Activated CD8-positive, alpha-beta memory T cell treated with anti-CD3 and anti-CD28 coated beads, Interleukin-2, amount 10 ng/mL, durations not matched to agents 7 days and 5 days (primary cell): ENCODE measurements at regions of chr9 and their contacts with region 1.

Region 1: GRCh38 chr9:124216567-124217176 is 41.1 kb upstream of the NEK6 start:
- DNase-seq: peak; percentile 87
- ATAC-seq: peak; percentile 70
- H3K4me3 Mint-ChIP-seq: peak overlapping the region; percentile 49
- H3K27ac Mint-ChIP-seq: peak overlapping the region; percentile 92
- H3K4me1 Mint-ChIP-seq: peaks cover 55% of the 10 kb centered on the region
- H3K27me3 Mint-ChIP-seq: peaks cover 13% of the 10 kb centered on the region

Region 2: DNA sequence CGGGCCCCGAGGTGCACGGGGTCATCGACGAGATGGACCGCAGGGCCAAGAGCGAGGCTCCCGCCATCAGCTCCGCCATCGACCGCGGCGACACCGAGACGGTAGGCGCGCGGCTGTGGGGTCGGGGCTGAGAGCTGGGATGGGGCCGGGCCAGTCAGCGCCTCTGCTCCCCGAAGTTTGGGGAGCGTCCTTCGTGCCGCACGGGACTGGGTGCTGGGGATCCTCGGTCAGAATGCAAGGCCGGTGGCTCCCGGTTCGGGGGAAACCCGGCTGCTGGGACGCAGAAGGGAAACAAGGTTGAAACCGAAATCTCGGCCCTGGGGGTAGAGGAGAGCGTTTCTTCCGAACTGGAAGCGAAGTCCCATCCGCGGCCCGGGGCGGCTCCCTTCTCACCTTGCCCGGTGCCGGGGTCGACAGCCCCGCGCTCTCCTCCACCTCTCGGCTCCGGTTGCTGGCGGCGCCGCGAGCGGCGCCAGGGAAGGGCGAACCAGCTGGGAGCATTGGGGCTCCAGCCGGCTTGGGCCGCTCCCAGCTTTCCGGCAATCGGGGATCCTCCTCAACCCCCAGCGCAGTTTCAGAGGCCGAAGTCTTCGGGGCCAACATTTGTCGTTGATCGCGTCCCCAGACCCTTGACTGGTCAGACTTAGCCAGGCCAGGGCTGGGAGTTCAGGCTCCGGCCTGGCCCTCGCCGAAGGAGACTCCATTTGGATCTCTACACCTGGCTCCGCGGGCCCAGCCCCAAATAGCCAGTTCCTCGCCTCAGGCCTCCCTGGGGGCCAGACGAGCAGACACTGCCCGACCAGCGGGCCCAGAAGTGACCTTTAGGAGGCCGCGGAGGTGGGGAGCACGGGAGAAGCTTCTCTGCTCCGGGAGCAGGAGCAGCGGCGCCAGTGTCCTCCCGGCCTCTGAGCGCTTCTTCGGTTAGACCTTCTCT is 204.0 kb before region 1 on chr9:
- CTCF ChIA-PET with region 1: no interaction called
- DNase-seq: no peak
- ATAC-seq: no peak
- H3K4me3 Mint-ChIP-seq: no peak overlapping the region
- H3K27ac Mint-ChIP-seq: peak overlapping the region; percentile 54
- H3K4me1 Mint-ChIP-seq: peaks cover 18% of the 10 kb centered on the region
- H3K27me3 Mint-ChIP-seq: peaks cover 82% of the 10 kb centered on the region

Region 3: GRCh38 chr9:124202447-124202971 is 14.2 kb before region 1 on chr9:
- CTCF ChIA-PET with region 1: interaction called, 17 read pairs
- DNase-seq: peak; percentile 92
- ATAC-seq: peak; percentile 99
- H3K4me3 Mint-ChIP-seq: peak overlapping the region; percentile 52
- H3K27ac Mint-ChIP-seq: peak overlapping the region; percentile 95
- H3K4me1 Mint-ChIP-seq: peaks cover 60% of the 10 kb centered on the region
- H3K27me3 Mint-ChIP-seq: peaks cover 8% of the 10 kb centered on the region

Region 4: DNA sequence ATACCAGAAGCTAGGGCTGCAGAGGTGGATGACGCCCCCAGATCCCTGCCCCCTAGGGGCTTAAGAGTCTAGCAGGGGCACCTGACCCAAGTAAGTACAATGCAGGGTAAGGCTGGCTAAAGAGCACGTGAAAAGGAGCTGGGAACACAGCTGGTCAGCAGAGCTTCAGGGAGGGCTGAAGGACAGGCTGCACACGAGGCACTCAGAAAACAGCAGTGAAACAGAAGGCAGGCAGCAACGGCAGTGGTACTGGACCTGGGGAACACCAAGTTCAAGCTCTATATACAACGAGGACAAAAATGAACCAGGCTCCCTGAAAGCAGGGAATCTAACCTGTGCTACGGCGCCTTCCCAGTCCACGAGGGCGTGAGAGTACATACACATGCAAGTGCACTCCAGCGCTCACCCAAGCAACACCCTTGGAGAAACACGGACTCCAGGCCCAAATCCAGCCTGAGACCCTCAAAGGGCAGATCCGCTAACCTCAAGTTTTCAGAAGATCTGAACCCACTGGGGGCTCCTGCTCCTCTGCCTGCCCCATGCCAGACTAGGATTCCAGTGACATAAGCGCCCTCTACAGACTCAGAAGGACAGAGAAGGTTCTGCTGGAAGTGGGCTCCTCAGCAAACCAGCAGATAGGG is 141.2 kb after region 1 on chr9:
- CTCF ChIA-PET with region 1: no interaction called
- DNase-seq: peak; percentile 35
- ATAC-seq: no peak
- H3K4me3 Mint-ChIP-seq: no peak overlapping the region
- H3K27ac Mint-ChIP-seq: peak overlapping the region; percentile 74
- H3K4me1 Mint-ChIP-seq: peaks cover 32% of the 10 kb centered on the region
- H3K27me3 Mint-ChIP-seq: no peaks in the 10 kb centered on the region

Region 5: GRCh38 chr9:124428751-124429529 is 212.3 kb after region 1 on chr9:
- CTCF ChIA-PET with region 1: no interaction called
- DNase-seq: no peak
- ATAC-seq: no peak
- H3K4me3 Mint-ChIP-seq: no peak overlapping the region
- H3K27ac Mint-ChIP-seq: no peak overlapping the region
- H3K4me1 Mint-ChIP-seq: no peaks in the 10 kb centered on the region
- H3K27me3 Mint-ChIP-seq: peaks cover 6% of the 10 kb centered on the region